Naive thymus-derived CD8-positive, alpha-beta T cell (primary cell): ENCODE measurements at regions of chr19 and their contacts with region 1.

Region 1: GRCh38 chr19:3762501-3763459 is at the start of gene MRPL54:
- DNase-seq: peak; percentile 97 to 100 (median 100)
- ATAC-seq: peak; percentile 84 to 86
- H3K4me3 Mint-ChIP-seq: peak within 1 kb of the TSS; percentile 97 to 100 (median 98)
- H3K27ac Mint-ChIP-seq: peak within 1 kb of the TSS; percentile 100
- H3K4me1 Mint-ChIP-seq: peaks cover 19 to 58% (median 48%) of the 10 kb centered on the region in 4 donors
- H3K27me3 Mint-ChIP-seq: peaks cover 0 to 4% (median 0%) of the 10 kb centered on the region in 5 donors
- polyA plus RNA-seq, gene MRPL54: 92.5 to 168 (median 120) TPM

Region 2: DNA sequence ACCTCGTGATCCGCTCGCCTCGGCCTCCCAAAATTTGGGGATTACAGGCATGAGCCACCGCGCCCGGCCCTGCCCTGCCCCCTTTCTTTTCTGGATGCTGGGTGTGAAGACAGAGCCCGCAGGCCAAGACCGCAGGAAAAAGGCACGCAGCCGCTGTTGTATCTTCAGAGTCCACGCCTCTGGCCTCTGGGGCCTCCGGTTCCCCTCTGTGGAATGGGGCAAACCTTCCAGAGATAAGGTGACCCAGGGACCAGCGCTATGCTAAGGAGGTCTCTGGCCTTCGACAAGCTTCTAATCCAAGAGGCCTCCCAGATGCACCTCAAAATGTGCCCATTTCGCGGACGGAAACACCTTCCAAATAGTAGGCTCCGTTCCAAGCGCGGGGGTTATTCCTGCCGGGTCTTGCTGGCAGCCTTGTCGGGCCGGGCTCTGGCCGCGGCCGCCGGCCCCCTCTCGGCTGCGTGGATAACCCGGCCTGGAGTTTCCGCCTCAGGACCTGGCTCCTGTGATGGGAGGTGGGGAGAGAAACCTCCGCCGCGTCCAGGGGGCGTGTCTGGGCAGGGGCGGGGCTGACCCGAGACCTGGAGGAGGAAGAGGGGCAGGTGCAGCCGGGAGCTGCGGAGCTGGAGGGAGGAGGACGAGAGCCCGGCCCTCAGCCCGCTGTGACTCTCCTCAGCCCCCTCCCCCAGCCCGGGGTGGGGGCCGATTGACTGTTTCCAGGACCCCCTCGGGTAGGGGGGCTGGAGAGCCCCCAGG is 41.5 kb before region 1 on chr19:
- POLR2A ChIA-PET with region 1: interaction called, 19 read pairs
- DNase-seq: peak; percentile 72 to 89 (median 80)
- ATAC-seq: peak; percentile 85 to 93
- H3K4me3 Mint-ChIP-seq: peak overlapping the region; percentile 75 to 90 (median 80)
- H3K27ac Mint-ChIP-seq: peak overlapping the region in 1 of 10 donors; percentile 9
- H3K4me1 Mint-ChIP-seq: peaks cover 5 to 31% (median 15%) of the 10 kb centered on the region in 4 donors
- H3K27me3 Mint-ChIP-seq: peaks cover 0 to 9% (median 2%) of the 10 kb centered on the region in 5 donors

Region 3: GRCh38 chr19:3748965-3749364 is 13.8 kb before region 1 on chr19:
- POLR2A ChIA-PET with region 1: interaction called, 18 read pairs
- DNase-seq: no peak
- ATAC-seq: no peak
- H3K4me3 Mint-ChIP-seq: no peak overlapping the region
- H3K27ac Mint-ChIP-seq: no peak overlapping the region
- H3K4me1 Mint-ChIP-seq: no peaks in the 10 kb centered on the region
- H3K27me3 Mint-ChIP-seq: no peaks in the 10 kb centered on the region

Region 4: DNA sequence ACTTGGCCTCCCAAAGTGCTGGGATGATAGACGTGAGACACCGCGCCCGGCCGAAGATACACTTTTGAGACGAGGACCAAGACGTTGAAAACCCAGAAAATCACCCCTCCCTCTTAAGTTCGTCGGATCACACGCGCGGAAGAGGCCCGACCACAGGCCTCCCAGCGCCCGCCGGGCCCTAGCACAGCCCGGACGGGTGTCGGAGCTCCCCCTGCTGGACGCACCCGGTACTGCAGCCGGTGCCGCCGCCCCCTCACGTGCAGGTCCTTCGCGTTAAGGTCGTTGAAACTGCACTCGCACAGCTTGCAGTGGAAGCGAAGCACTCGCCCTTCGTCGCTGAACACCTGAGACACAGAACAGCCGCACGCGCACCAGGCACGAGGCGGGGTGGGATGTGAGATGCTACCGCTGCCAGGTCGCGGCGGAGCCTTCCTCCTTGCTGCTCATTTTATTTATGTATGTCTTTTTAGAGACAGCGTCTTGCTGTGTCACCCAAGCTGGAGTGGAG is 59.1 kb after region 1 on chr19:
- POLR2A ChIA-PET with region 1: interaction called, 38 read pairs
- DNase-seq: peak; percentile 73 to 95 (median 90)
- ATAC-seq: peak; percentile 98 to 99
- H3K4me3 Mint-ChIP-seq: peak overlapping the region in 9 of 10 donors; percentile 16 to 72 (median 53)
- H3K27ac Mint-ChIP-seq: peak overlapping the region in 7 of 10 donors; percentile 13 to 88 (median 71)
- H3K4me1 Mint-ChIP-seq: peaks cover 10 to 32% (median 23%) of the 10 kb centered on the region in 4 donors
- H3K27me3 Mint-ChIP-seq: no peaks in the 10 kb centered on the region